ENCODE measurements at regions of chr1 and their contacts with region 1.

Region 1: DNA sequence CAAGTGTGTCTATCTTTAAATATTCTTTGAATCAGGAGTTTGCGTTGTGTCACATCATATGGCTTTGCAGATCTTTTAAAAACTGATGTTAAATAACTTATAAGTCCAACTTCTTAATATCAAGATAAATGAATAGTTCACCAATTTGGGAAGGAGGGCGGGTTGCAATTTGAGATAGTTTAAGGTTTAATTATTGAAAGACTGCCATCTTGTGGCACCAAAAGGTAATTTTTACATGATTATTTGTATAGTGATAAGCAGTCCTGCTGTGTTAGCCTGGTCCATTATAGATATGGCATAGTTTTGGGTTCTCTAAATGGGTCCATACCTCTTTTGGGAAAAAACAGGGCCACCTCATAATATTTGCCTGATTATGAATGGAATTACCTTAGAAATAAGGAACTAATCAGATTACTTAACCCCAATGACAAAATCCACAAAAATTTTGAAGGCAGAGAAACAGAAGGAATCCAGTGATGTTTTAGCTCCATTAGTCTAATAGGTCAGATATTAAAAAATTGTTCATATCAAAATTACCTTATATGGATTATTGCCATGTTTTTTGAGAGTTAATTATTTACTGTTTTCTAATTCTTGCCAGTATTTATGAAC is 64.3 kb downstream of the PRKAA2 start:
- DNase-seq: no peak
- H3K4me3 ChIP-seq: no peak overlapping the region
- H3K27me3 ChIP-seq: no peaks in the 10 kb centered on the region
- CTCF ChIP-seq: peak; percentile 54

Region 2: GRCh38 chr1:56584910-56585528 is 124.4 kb before region 1 on chr1:
- CTCF ChIA-PET with region 1: interaction called, 12 read pairs
- POLR2A ChIA-PET with region 1: no interaction called
- DNase-seq: no peak
- H3K4me3 ChIP-seq: no peak overlapping the region
- H3K27me3 ChIP-seq: no peaks in the 10 kb centered on the region
- CTCF ChIP-seq: peak; percentile 78

Region 3: DNA sequence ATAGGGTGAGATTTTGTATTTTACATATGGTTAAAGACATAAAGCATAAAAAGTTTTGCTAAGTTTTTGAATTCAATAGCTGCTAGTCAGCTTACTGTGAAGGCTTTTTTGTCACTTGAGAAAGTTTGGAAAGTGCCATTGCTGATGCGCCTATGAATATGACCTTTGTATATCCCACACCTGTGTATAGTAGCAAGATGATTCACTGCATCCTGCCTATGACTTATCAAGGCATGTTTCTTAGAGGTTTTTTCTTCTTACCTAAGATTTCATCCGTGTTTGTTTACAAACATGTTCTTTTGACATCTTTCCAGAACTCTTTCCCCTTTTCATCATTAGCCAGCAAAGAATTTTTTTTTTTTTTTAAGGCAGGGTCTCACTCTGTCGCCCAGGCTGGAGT is 12.7 kb before region 1 on chr1:
- CTCF ChIA-PET with region 1: interaction called, 12 read pairs
- POLR2A ChIA-PET with region 1: no interaction called
- DNase-seq: no peak
- H3K4me3 ChIP-seq: no peak overlapping the region
- H3K27me3 ChIP-seq: no peaks in the 10 kb centered on the region
- CTCF ChIP-seq: no peak

Region 4: GRCh38 chr1:56821140-56821797 is 111.9 kb after region 1 on chr1:
- CTCF ChIA-PET with region 1: interaction called, 19 read pairs
- POLR2A ChIA-PET with region 1: no interaction called
- DNase-seq: no peak
- H3K4me3 ChIP-seq: no peak overlapping the region
- H3K27me3 ChIP-seq: no peaks in the 10 kb centered on the region
- CTCF ChIP-seq: peak; percentile 98